ENCODE measurements at regions of chr1 and their contacts with region 1.

Region 1: GRCh38 chr1:175023043-175023921 is at the start of gene MRPS14:
- DNase-seq: peak; percentile 97
- H3K4me3 ChIP-seq: peak within 1 kb of the TSS; percentile 96
- H3K27ac ChIP-seq: peak within 1 kb of the TSS; percentile 85
- H3K4me1 ChIP-seq: no peaks in the 10 kb centered on the region
- H3K27me3 ChIP-seq: no peaks in the 10 kb centered on the region
- CTCF ChIP-seq: no peak
- total RNA-seq, gene MRPS14: 39.6 and 40.1 TPM in 2 replicates

Region 2: GRCh38 chr1:175319418-175320230 is 296.3 kb after region 1 on chr1:
- CTCF ChIA-PET with region 1: no interaction called
- POLR2A ChIA-PET with region 1: no interaction called
- intact Hi-C with region 1: loop called (anchors 2 kb)
- DNase-seq: peak; percentile 64
- H3K4me3 ChIP-seq: no peak overlapping the region
- H3K27ac ChIP-seq: no peak overlapping the region
- H3K4me1 ChIP-seq: no peaks in the 10 kb centered on the region
- H3K27me3 ChIP-seq: no peaks in the 10 kb centered on the region
- CTCF ChIP-seq: peak; percentile 85

Measured in A673 (cell line).